Endothelial cell of umbilical vein (primary cell): ENCODE measurements at regions of chr11 and their contacts with region 1.

Region 1: DNA sequence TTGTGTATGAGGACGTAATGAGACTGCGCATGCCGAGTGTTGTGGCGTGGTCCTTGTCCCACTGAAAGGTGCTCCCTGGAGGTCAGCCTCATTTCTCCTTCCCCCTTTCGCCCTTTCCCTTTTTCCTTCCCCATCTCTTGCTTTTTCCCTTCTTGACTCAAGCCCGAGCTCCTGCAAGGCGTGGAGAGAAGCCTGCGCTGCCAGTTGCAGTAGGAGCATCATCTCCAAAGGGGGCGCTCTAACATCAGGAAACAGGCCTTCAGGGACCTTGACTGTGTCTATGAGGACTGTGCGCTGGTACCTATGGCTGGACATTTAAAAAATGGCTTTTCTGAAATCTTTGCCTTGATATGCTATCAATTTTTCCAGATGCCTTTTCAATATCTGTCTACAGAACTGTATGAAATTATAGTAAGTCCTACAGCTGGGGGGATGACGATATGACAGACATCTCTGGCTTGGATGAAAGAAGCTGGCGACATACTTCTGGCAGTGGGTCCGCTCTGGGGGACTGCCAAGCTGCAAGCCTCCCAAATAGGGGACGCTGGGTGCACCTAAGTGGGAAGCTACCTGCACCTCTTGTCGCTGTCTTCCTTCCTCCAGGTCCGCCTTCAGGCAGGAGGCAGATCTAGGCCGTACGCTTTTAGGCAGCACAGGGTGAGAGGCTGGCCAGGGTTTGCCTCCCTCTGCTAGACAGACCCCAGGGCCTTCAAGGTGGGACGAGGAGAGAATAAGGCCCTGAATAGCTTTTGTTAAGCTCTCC is 96.5 kb downstream of the NXPE2 start:
- DNase-seq: peak; percentile 49
- H3K4me3 ChIP-seq: no peak overlapping the region
- H3K27ac ChIP-seq: no peak overlapping the region
- H3K4me1 ChIP-seq: no peaks in the 10 kb centered on the region
- H3K27me3 ChIP-seq: no peaks in the 10 kb centered on the region
- CTCF ChIP-seq: peak; percentile 65 to 72
- POLR2A ChIP-seq: no peak

Region 2: GRCh38 chr11:114522818-114523217 is 252.0 kb before region 1 on chr11:
- CTCF ChIA-PET with region 1: no interaction called
- POLR2A ChIA-PET with region 1: no interaction called
- dilution Hi-C with region 1: no loop called
- intact Hi-C with region 1: no loop called
- DNase-seq: no peak
- H3K4me3 ChIP-seq: no peak overlapping the region
- H3K27ac ChIP-seq: no peak overlapping the region
- H3K4me1 ChIP-seq: no peaks in the 10 kb centered on the region
- H3K27me3 ChIP-seq: no peaks in the 10 kb centered on the region
- CTCF ChIP-seq: no peak
- POLR2A ChIP-seq: no peak

Region 3: GRCh38 chr11:115324581-115325432 is 550.0 kb after region 1 on chr11:
- CTCF ChIA-PET with region 1: no interaction called
- POLR2A ChIA-PET with region 1: no interaction called
- dilution Hi-C with region 1: no loop called
- intact Hi-C with region 1: loop called (anchors 5 kb)
- DNase-seq: peak; percentile 14
- H3K4me3 ChIP-seq: no peak overlapping the region
- H3K27ac ChIP-seq: no peak overlapping the region
- H3K4me1 ChIP-seq: no peaks in the 10 kb centered on the region
- H3K27me3 ChIP-seq: no peaks in the 10 kb centered on the region
- CTCF ChIP-seq: peak; percentile 50 to 63
- POLR2A ChIP-seq: no peak

Region 4: GRCh38 chr11:115334932-115335788 is 560.4 kb after region 1 on chr11:
- CTCF ChIA-PET with region 1: interaction called, 10 read pairs
- POLR2A ChIA-PET with region 1: no interaction called
- dilution Hi-C with region 1: no loop called
- intact Hi-C with region 1: loop called (anchors 1 kb)
- DNase-seq: peak; percentile 41
- H3K4me3 ChIP-seq: no peak overlapping the region
- H3K27ac ChIP-seq: no peak overlapping the region
- H3K4me1 ChIP-seq: no peaks in the 10 kb centered on the region
- H3K27me3 ChIP-seq: no peaks in the 10 kb centered on the region
- CTCF ChIP-seq: peak; percentile 29 to 33
- POLR2A ChIP-seq: no peak

Region 5: DNA sequence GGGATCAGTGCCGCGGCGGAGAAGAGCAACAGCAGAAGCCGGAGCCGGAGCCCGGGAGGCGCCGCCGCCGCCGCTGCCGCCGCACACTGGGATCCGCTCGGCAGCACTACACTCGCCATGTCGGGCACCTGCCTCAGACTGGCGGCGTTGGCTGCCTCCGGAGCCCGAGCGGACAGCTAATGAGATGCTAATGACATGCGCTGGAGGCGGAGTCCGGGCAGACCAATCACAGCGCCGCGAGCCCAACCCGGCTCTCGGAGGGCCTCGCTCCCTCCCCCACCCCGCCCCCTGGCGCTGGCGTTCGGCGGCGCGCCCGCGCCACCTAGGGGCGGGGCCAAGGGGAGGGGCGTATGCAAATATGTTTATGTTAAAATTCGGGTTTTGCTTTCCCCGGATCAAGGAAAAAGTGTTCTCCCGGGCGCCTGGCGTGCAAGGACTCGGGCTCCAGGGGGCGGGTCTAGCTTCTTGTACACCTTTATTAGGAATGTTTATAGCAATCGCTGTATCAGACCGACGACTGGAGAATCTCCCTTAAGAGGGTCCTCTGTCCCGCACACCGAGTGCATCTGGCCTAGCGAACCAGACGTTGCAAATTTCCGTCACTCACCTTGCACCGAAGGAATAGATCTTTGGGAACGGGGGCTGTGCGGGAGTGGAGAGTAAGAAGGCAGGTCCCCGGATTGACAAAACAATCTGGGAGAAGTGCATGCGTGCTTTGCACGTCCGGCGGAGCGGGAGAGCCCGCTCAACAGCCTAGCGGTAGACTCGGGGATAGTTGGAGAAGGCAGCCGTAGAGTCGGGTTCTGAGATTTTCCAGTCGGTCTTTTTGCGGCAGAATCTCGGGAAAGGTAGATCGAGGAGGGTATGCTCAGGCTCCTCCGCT is 729.7 kb after region 1 on chr11 and contains the start of gene CADM1:
- CTCF ChIA-PET with region 1: interaction called, 3 read pairs
- POLR2A ChIA-PET with region 1: no interaction called
- dilution Hi-C with region 1: no loop called
- intact Hi-C with region 1: loop called (anchors 2 kb)
- DNase-seq: peak; percentile 84
- H3K4me3 ChIP-seq: peak within 1 kb of the TSS; percentile 4 to 42 (median 41)
- H3K27ac ChIP-seq: no peak within 1 kb of the TSS
- H3K4me1 ChIP-seq: peaks cover 9% of the 10 kb centered on the region
- H3K27me3 ChIP-seq: peaks cover 16 to 39% of the 10 kb centered on the region in 2 experiments
- CTCF ChIP-seq: peak; percentile 58 to 63
- POLR2A ChIP-seq: no peak
- total RNA-seq, gene CADM1: 2.6 and 2.9 TPM in 2 replicates

Region 6: DNA sequence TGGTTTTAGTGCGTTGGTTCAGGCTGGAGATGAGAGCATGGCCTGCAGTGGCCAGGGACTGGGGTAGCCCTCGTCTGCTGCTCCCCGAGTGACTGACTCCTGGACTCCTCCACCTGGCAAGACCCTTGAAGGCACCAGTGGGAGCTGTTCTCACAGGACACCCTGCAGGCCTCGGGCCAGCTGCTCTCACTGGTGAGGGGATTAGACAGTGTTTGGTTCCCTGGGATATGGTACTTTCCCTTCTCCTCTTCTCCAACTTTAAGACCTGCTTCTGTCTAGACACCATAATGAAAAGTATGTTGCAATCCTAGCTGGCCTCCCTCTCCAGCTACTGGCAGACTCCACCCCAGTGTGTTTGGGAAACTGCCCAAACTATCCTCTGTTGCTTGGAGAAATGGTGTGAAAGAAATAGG is 898.2 kb after region 1 on chr11:
- CTCF ChIA-PET with region 1: no interaction called
- POLR2A ChIA-PET with region 1: no interaction called
- dilution Hi-C with region 1: no loop called
- intact Hi-C with region 1: loop called (anchors 10 kb)
- DNase-seq: no peak
- H3K4me3 ChIP-seq: no peak overlapping the region
- H3K27ac ChIP-seq: no peak overlapping the region
- H3K4me1 ChIP-seq: no peaks in the 10 kb centered on the region
- H3K27me3 ChIP-seq: no peaks in the 10 kb centered on the region
- CTCF ChIP-seq: no peak
- POLR2A ChIP-seq: no peak

Region 7: GRCh38 chr11:116224154-116224888 is 1449.5 kb after region 1 on chr11:
- CTCF ChIA-PET with region 1: interaction called, 10 read pairs
- POLR2A ChIA-PET with region 1: no interaction called
- dilution Hi-C with region 1: no loop called
- intact Hi-C with region 1: no loop called
- DNase-seq: peak; percentile 34
- H3K4me3 ChIP-seq: no peak overlapping the region
- H3K27ac ChIP-seq: no peak overlapping the region
- H3K4me1 ChIP-seq: no peaks in the 10 kb centered on the region
- H3K27me3 ChIP-seq: no peaks in the 10 kb centered on the region
- CTCF ChIP-seq: peak; percentile 58 to 69
- POLR2A ChIP-seq: no peak

Region 8: DNA sequence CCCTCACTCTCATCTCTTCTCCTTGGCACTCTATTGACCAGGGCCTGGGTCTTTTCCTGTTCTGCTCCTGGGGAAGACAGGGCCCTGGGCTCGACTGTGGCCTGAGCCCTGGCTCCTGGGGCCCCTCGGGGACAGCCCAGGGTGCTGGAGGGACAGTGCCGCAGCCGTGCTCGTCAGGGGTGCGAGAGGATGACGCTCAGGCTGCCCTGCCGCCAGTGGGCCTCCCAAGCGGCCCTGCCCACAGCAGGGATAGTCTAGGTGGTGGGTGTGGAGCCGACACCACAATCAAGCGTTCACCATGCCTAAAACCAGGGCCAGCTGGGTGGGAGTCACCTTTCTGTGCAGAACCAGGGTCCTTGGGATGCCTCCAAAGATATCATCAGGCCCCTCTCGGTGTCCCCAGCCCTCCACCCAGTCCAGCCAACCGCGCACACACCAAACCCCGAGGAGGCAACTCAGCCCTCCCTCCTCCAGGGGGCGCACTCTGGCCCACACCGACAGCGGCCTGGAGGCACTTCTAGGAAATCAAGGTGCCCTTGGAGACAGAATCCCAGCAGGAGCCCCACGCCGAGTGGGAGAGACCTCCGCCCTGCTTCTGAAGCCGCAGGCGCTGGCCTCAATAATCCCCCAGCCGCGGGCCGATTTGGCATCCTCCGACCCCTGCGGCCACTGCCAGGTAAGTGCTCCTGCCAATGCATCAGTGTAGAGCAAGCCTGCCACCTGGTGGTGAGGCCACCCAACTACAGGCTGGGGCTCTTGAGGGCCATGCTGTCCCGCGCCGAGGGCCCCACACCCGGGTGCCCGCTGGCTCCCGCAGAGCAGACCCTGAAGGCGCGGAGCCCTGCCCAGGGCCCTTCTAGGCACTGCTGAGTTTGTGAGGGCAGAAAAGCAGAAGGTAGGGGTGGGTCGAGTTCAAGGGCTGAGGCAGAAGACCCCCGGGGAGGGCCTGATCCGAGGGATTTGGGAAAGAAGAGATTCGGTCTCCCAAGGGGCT is 1501.6 kb after region 1 on chr11:
- CTCF ChIA-PET with region 1: no interaction called
- POLR2A ChIA-PET with region 1: no interaction called
- dilution Hi-C with region 1: no loop called
- intact Hi-C with region 1: loop called (anchors 1 kb)
- DNase-seq: peak; percentile 50
- H3K4me3 ChIP-seq: no peak overlapping the region
- H3K27ac ChIP-seq: no peak overlapping the region
- H3K4me1 ChIP-seq: no peaks in the 10 kb centered on the region
- H3K27me3 ChIP-seq: peaks cover 0 to 3% of the 10 kb centered on the region in 2 experiments
- CTCF ChIP-seq: peak; percentile 84 to 95
- POLR2A ChIP-seq: no peak